ENCODE measurements at regions of chr15 and their contacts with region 1.

Region 1: DNA sequence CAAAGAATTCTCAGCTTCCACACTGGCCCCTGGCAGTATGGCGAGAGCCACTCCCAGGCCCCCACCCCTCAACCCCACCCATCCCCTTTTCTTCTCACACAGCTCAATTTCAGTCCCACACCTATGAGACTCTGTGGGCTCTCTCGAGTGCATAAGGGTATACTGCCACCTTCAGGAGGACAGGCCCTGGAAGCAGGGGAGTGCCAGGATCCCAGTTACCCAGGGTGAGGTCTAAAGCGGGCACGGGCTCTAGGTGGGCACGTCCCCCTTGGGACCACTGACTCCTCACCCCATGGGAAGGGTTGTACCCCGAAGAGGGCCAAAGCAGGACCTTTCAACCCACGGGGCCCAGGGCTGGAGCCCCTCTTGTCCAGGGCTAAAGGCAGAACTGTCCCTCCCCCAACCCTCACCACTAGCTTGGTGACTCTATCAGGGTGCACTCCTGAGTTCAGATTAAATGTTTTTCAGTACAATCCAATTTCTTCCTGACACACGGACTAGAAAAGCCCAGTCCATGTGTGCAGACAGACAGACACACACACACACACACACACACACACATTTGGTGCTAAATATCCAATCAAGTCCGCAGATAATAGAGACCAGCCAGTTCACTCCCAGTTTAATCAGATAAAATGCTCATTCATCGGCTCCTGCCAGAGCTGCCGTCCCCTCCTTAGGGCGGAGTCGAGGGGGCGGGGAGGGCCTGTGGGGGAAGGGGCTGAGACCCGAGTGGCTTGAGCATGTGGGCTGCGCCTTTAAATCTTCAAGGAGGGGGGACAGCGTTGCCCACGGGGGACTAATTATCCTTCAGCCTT is 59.4 kb downstream of the CYP11A1 start:
- DNase-seq: peak; percentile 63
- ATAC-seq: peak; percentile 66
- H3K4me3 Mint-ChIP-seq: peak overlapping the region; percentile 31
- H3K27ac Mint-ChIP-seq: no peak overlapping the region
- H3K4me1 Mint-ChIP-seq: peaks cover 71% of the 10 kb centered on the region
- H3K27me3 Mint-ChIP-seq: peaks cover 32% of the 10 kb centered on the region
- CTCF ChIP-seq: peak; percentile 16; the same call in 1 of the 2 replicates

Region 2: DNA sequence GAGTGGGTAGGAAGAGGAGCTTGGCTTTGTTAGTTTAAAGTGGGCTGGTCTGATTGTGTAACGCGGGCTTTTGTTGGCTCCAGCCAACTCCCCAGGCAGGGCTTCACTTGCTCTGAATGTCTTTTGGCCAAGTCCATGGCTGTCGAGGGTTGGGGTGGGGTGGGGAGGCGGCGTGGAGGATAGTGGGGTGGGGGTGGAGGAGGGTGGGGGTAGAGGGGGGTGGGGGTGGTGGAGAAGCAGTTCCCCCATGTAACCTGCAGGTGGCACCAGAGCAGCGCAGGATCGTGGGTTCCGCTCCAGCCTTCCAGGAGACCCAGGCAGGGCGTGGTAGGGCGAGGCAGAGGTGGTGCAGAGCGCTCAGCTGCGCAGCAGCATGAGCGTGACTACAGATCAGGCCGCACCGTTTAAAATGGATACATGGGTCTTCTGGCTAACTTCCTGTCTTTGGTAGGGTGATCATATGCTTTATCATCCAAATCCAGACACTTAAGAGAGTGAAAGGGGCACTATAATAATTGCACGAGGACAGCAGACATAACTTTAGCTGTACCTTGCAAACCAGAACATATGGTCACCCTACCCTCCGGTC is 254.0 kb before region 1 on chr15:
- CTCF ChIA-PET with region 1: interaction called, 65 read pairs
- POLR2A ChIA-PET with region 1: no interaction called
- DNase-seq: peak; percentile 82
- ATAC-seq: peak; percentile 97
- H3K4me3 Mint-ChIP-seq: no peak overlapping the region
- H3K27ac Mint-ChIP-seq: no peak overlapping the region
- H3K4me1 Mint-ChIP-seq: peaks cover 17% of the 10 kb centered on the region
- H3K27me3 Mint-ChIP-seq: peaks cover 21% of the 10 kb centered on the region
- CTCF ChIP-seq: peak; percentile 73

Region 3: DNA sequence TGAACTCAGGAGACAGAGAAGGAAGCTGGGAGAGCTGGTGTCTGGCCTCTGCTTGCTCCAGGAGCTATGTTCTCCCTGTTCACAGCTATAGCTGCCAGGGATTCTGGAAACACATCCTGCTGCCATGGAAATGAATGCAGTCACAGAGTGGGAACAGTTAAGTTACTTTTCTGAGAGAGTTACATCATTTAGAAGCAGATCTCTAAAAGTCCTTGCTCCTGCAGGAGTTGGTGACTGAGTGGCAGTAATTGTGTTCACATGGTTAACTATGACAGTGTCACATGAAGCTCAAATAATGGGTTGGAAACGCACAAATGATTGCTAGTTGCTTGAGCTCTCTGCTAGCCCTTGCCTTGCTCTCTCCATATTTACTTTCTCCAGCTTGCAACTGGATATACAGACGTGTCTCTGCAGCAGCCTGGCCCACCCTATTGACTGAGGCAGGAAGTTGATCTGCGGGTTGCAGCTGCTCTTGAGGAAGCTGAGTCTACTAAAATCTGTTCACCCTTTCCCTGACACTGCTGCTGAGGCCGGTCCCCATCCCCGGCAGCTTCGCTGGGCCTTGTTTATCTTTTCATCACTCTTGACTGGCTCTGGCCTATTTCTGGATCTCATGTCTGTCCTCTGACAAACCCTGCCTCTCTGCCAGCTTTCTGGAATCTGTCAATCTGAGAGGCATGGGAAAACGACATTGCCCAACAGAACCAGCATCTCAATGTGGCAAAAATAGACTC is 151.2 kb before region 1 on chr15:
- CTCF ChIA-PET with region 1: interaction called, 10 read pairs
- POLR2A ChIA-PET with region 1: no interaction called
- DNase-seq: no peak
- ATAC-seq: peak; percentile 36; the same call in 1 of the 2 replicates
- H3K4me3 Mint-ChIP-seq: no peak overlapping the region
- H3K27ac Mint-ChIP-seq: no peak overlapping the region
- H3K4me1 Mint-ChIP-seq: peaks cover 10% of the 10 kb centered on the region
- H3K27me3 Mint-ChIP-seq: peaks cover 2% of the 10 kb centered on the region; the same call in 1 of the 2 replicates
- CTCF ChIP-seq: no peak

Region 4: DNA sequence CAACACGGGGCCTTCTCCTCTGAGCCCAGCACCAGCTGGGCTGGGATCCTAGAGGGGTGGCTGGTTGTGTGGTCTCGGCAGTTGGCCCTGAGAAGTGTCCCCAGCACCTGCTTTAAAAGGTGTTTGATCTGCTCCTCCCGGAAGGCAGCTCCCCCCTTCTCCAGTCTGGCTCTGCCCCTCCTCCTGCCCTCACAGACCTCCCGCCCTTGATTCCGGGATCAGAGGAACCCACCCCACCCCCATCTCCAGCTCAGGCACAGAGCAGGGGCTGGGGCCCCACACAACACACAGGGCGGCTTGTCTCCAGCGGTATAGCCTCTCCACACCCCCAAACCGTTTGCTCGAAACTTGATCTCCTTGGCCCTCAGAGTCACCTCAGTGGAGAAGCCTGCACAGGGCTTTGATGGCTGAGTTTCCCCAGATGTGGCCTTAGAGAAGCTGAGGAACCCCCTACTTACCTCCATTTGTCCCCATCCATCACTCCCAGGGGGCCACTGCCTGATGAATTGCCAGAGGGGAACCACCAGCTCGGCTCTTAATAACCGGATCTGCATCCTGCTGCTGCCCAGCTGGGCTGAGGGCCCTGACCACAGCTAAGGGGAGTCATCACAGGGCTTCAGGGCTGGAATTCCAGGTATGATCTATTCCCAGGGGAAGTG is 99.0 kb before region 1 on chr15:
- CTCF ChIA-PET with region 1: interaction called, 78 read pairs
- POLR2A ChIA-PET with region 1: no interaction called
- DNase-seq: peak; percentile 71
- ATAC-seq: peak; percentile 70
- H3K4me3 Mint-ChIP-seq: peak overlapping the region; percentile 44
- H3K27ac Mint-ChIP-seq: peak overlapping the region; percentile 91
- H3K4me1 Mint-ChIP-seq: peaks cover 80% of the 10 kb centered on the region
- H3K27me3 Mint-ChIP-seq: peaks cover 20% of the 10 kb centered on the region
- CTCF ChIP-seq: no peak

Region 5: DNA sequence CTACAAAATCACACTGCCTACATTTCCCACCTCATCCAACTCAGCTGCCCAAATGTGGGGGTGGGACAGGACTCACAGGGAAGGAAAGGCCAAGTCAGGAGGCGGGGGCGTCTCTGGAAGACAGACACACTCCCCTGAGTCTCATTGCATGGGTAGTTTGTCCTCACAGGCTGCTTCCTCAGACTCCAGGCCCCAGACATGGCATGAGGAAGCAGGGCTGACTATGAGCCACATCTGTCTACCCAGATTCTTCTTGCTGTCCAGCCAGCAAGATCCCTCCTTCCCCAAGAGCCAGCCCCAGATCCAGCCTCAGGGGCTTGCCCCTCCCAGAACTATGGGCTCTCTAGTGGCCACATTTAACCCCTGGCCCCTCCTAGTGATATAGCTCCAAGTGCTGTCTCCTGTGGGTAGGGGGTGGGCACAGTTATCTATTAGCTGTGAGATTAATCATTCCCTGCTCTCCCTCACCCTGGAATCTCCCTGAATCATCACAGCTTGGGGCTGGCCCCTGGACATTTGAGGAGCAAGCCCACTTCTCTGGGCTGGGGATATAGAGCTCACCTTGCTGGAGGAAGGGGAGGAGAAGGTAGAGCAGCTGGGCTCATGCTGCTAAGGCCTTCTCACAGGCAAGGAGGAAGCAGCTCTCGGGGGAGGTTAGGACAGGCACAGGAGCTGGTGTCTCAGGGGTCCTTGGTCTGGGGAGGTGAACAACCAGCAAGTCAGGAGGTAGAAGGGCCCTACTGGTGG is 74.0 kb before region 1 on chr15:
- CTCF ChIA-PET with region 1: interaction called, 25 read pairs
- POLR2A ChIA-PET with region 1: no interaction called
- DNase-seq: no peak
- ATAC-seq: no peak
- H3K4me3 Mint-ChIP-seq: no peak overlapping the region
- H3K27ac Mint-ChIP-seq: no peak overlapping the region
- H3K4me1 Mint-ChIP-seq: peaks cover 16% of the 10 kb centered on the region
- H3K27me3 Mint-ChIP-seq: peaks cover 41% of the 10 kb centered on the region
- CTCF ChIP-seq: no peak

Region 6: DNA sequence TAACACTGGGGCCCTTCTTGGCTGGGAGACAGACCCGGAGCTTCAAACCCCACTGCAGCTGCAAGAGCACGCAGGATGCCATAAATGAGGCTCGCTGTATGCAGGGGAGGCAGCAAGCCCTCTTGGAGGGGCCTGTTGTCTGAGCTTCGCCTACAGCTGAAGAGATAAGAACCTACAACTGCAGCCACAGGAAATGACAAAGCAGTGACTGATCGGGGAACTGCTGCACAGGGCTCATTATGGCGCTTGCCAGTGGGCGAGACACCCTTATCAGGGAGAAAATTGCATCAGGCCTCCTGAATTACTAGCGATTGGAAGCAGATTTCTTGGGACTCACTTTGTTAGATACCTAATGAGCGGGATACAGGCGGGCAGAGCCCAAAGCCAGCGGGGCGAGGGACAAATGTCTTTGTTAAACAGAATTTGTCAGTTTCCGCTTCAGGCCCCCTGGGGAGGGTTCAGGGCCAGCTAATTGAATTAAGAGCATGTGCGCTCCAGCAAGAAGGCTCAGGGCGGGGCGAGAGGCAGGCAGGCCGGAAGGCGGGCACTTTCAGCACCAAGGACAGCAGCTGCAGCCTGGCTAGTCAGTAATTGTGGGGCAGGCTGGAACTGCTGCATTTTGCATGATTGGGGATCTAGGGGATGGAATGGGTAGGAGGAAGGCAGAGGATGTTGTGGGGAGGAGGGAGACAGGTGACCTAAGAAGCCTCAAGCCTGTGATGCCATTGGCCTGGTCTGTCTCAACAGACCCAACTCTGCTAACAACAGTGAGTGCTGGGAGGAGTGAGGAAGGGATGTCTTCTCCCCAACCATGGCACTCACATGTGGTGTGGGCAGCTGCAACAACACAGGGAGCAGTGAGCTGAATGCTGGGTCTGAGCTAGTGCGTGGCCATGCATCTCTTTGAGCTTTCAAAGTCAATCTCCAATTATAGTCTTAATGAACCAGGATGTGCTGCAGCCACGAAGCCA is 16.6 kb before region 1 on chr15:
- CTCF ChIA-PET with region 1: interaction called, 17 read pairs
- POLR2A ChIA-PET with region 1: no interaction called
- DNase-seq: peak; percentile 99
- ATAC-seq: peak; percentile 88
- H3K4me3 Mint-ChIP-seq: peak overlapping the region; percentile 51
- H3K27ac Mint-ChIP-seq: no peak overlapping the region
- H3K4me1 Mint-ChIP-seq: peaks cover 23% of the 10 kb centered on the region
- H3K27me3 Mint-ChIP-seq: peaks cover 59% of the 10 kb centered on the region
- CTCF ChIP-seq: no peak

Region 7: GRCh38 chr15:74635228-74635627 is 327.2 kb after region 1 on chr15:
- CTCF ChIA-PET with region 1: no interaction called
- POLR2A ChIA-PET with region 1: no interaction called
- DNase-seq: peak; percentile 80
- ATAC-seq: peak; percentile 83
- H3K4me3 Mint-ChIP-seq: no peak overlapping the region
- H3K27ac Mint-ChIP-seq: no peak overlapping the region
- H3K4me1 Mint-ChIP-seq: no peaks in the 10 kb centered on the region
- H3K27me3 Mint-ChIP-seq: no peaks in the 10 kb centered on the region
- CTCF ChIP-seq: peak; percentile 84

Measured in WTC11 (cell line).